ENCODE measurements at regions of chr2 and their contacts with region 1.

Region 1: GRCh38 chr2:190088917-190089316 is 26.4 kb upstream of the MSTN start:
- DNase-seq: peak; percentile 14
- H3K4me3 Mint-ChIP-seq: no peak overlapping the region
- H3K27ac Mint-ChIP-seq: no peak overlapping the region
- H3K4me1 Mint-ChIP-seq: no peaks in the 10 kb centered on the region
- H3K27me3 Mint-ChIP-seq: no peaks in the 10 kb centered on the region

Region 2: DNA sequence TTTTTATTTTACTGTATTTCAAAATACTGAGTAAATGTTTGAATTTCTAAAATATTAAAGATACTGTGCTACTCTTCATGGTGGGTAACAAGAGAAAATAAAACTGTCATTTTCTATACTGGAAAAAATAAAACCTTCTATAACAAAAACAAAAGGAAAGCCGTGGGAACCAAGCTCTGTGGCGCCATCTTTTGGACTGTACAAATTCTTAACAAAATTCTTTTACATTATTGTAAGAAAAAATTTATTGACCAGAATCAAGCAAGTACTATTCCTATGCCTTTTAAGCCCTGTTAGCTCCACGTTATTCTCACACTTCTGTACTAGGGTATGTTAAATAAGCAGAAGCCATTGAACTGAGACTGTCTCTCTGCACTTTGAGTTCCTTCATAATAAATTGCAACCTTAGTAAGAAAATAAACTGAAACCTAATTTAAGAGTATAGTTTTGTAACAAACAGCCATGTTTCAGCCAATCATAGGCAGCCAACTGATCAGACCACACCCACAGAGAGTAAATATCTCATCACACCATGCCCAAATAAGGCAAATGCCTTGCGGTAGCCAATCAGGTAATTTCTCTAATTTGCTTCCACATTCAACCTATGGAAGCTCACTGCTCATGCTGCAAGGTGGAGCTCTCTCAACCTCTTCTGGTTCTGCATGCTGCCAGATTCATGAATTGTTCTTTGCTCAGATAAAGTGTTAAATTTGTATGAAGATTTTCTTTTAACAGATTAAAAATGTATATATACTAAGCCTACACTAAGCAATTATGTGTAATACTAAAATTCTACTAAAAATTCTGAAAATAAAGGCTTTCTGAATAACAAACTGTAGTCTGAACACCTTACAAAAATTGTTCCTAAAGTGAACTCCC is 188.6 kb after region 1 on chr2:
- intact Hi-C with region 1: loop called (anchors 1 kb)
- DNase-seq: no peak
- H3K4me3 Mint-ChIP-seq: no peak overlapping the region
- H3K27ac Mint-ChIP-seq: no peak overlapping the region
- H3K4me1 Mint-ChIP-seq: peaks cover 9% of the 10 kb centered on the region
- H3K27me3 Mint-ChIP-seq: no peaks in the 10 kb centered on the region

Region 3: DNA sequence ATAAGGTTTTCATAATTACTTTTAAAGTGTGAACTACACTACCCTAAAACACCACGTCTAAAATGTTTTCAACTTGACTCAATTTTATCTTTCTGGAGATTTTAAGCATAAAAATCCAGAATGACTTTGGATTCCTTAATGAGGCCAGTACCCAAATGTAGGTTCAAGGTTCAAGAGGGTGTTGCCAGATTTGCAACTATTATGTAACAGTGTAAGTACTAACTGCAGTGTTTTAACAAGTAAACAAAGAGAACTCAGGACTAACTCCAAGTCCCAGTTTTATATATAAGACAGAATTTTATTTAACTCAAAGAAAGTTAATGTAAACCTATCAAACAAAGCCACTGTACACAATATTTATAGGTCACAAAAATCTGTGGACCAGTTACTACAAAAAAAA is 225.0 kb after region 1 on chr2:
- intact Hi-C with region 1: loop called (anchors 1 kb)
- DNase-seq: no peak
- H3K4me3 Mint-ChIP-seq: no peak overlapping the region
- H3K27ac Mint-ChIP-seq: no peak overlapping the region
- H3K4me1 Mint-ChIP-seq: peaks cover 33% of the 10 kb centered on the region
- H3K27me3 Mint-ChIP-seq: no peaks in the 10 kb centered on the region

Region 4: GRCh38 chr2:190376591-190377245 is 287.8 kb after region 1 on chr2:
- intact Hi-C with region 1: loop called (anchors 1 kb)
- DNase-seq: no peak
- H3K4me3 Mint-ChIP-seq: no peak overlapping the region
- H3K27ac Mint-ChIP-seq: no peak overlapping the region
- H3K4me1 Mint-ChIP-seq: no peaks in the 10 kb centered on the region
- H3K27me3 Mint-ChIP-seq: peaks cover 2% of the 10 kb centered on the region

Region 5: GRCh38 chr2:190511104-190511503 is 422.2 kb after region 1 on chr2:
- intact Hi-C with region 1: loop called (anchors 10 kb)
- DNase-seq: no peak
- H3K4me3 Mint-ChIP-seq: no peak overlapping the region
- H3K27ac Mint-ChIP-seq: no peak overlapping the region
- H3K4me1 Mint-ChIP-seq: peaks cover 29% of the 10 kb centered on the region
- H3K27me3 Mint-ChIP-seq: no peaks in the 10 kb centered on the region